Right ventricle myocardium inferior (tissue), 1 donor: ENCODE measurements at regions of chr5 and their contacts with region 1.

Region 1: DNA sequence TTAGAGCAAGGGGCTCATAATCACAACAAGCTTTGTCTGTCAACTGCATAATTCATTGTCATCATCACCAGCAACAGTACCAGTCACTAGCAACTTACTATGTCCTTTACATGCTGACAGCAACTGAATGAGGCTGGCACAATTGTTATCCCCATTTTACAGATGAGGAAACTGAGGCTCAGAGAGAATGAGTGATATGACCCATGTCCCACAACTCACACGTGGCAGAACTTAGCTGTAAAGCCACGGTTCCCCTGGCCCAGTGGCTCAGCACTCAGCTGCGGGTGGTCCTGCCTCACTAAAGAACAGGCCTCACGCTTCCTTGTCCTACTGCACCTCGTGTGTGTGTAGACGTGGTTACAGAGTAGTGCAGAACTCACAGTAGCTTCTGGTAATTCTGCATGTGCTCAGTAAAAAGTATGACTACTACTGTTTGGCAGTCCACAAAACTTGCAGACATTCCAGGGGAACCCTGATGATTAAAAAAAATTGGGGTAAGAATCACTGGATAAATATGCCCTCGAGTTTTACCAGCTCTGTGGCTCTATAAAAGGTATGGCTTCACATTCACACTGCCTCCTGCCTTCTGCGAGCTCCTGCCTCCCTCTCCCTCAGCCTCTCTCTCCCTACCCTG is 30.2 kb downstream of the AFAP1L1 start:
- DNase-seq: no peak
- ATAC-seq: no peak

Region 2: GRCh38 chr5:149254506-149254905 is 47.4 kb before region 1 on chr5:
- intact Hi-C with region 1: no loop called
- DNase-seq: no peak
- ATAC-seq: no peak

Region 3: DNA sequence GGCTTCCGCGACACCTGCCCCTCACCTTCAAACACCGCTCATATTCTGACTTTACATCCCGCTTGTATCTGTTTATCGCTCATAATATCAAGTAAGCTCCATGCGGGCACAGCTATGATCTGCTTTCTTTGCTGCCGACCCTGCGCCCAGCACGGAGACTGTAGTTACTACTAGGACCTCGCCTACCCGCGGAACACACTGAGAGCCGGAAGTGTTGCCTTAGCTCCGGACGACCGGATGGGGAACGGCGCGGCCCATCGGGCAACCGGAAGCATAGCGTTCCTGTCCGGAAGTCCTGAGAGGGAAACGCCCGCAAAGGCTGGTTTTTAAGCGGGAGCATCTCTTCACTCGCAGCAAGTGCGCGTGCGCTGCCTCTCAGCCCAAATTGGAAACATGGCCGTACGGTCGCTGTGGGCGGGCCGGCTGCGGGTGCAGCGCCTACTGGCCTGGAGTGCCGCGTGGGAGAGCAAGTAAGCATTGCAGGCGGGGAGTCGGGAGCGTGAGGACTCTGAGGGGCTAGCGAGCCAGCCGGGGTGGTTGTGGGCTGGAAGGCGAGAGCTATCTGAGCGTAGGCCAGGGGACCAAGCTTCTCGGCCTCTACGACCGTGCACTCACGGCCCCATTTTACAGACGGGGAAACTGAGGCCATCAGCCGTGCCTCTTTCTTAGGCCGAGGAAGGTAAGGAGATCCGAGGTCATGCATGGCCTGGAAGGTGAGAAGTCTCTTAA is 43.4 kb after region 1 on chr5 and contains the start of gene GRPEL2:
- intact Hi-C with region 1: loop called (anchors 5 kb)
- DNase-seq: peak; percentile 98
- ATAC-seq: peak; percentile 98
- total RNA-seq, gene GRPEL2: 11.6 TPM